KBM-7 (cell line): ENCODE measurements at regions of chr22 and their contacts with region 1.

Region 1: GRCh38 chr22:36180038-36180880 is 19.7 kb upstream of the APOL3 start:
- DNase-seq: peak; percentile 74

Region 2: GRCh38 chr22:36221799-36222751 is 41.8 kb after region 1 on chr22:
- in situ Hi-C with region 1: no loop called
- DNase-seq: peak; percentile 75

Region 3: DNA sequence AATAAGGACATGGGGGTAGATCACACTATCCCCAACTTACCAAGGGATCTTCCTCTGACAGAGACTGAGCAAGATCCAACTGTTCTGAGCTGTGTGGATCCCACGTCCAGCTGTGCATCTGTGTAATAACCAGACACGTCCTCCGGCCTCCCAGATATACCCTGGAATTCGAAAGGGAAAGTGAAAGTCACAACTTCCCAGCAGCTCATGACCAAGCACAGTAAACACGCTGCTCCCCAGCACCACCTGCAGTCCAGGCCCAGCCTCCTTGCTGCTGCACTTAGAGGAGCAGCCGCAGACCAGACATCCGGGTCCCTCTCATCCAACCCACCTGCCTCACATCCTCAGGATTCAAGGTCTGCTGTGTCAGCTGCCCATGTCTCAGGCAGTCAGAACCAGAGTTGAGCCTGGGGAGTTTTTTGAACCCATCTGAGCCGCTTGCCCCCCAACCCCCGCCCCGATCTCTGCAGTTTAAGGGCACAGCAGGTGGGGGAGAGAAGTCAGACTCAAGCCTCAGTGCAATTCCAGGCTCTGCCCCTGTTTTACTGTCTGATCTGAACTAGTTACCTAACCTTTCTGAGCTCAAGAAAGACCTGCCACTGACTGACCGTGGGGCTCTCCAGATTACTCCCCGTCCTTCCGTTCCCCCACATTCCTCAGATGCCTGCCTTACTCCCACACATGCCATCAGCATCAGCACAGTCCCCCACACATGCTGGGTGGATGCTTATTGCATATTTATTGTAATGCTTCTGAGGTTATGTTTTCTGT is 59.3 kb after region 1 on chr22 and contains the start of gene APOL2:
- in situ Hi-C with region 1: no loop called
- DNase-seq: peak; percentile 89

Region 4: GRCh38 chr22:36481393-36482168 is 301.3 kb after region 1 on chr22 and contains the start of gene TXN2:
- in situ Hi-C with region 1: loop called (anchors 25 kb)
- DNase-seq: peak; percentile 95

Region 5: GRCh38 chr22:36506637-36507517 is 326.6 kb after region 1 on chr22 and contains the start of gene FOXRED2:
- in situ Hi-C with region 1: no loop called
- DNase-seq: peak; percentile 87